Cardiac septum (tissue), 1 donor: ENCODE measurements at regions of chr5 and their contacts with region 1.

Region 1: GRCh38 chr5:36305571-36306326 is 4.0 kb upstream of the RANBP3L start:
- DNase-seq: no peak

Region 2: DNA sequence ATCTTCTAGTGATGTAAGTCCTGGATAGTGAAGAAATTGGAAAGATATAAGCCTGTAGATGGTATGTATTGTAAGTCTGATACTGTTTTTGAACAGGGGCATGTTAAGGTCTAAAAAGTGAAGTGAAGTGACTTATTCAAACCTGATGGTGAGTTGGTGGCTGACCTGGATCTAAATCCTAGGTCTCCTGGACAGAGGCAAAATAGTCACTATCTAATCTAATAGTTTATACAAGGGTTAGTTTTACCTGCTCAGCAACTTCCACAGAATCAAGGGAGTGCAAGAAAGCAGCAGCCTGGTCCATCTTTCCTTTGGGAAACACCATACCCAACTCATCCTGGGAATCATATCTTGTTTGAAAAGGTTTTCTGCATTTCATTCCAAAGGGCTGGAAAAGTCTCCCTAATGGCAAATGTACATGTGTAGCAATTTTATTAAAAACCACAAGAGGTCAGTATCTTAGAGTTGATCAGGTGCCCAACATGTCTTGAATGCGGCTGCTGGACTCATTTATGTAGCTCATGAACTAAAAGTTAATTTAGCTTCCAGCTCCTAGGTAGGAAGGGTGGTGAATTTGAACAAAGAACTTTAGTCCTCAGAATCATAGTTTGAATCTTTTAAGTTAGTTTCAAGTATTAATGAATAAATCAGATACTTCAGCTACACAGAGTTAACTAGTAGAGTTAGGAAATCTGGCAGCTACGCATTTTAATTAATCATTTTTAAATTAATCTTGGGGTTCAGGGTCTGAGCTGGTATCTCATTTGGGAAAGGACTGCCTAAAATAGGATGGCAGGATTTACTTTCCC is 127.8 kb before region 1 on chr5:
- intact Hi-C with region 1: loop called (anchors 5 kb)
- DNase-seq: no peak

Region 3: GRCh38 chr5:36241631-36242533 is 63.9 kb before region 1 on chr5 and contains the start of gene NADK2:
- intact Hi-C with region 1: loop called (anchors 10 kb)
- DNase-seq: peak; percentile 97
- total RNA-seq, gene NADK2: 34.6 TPM

Region 4: DNA sequence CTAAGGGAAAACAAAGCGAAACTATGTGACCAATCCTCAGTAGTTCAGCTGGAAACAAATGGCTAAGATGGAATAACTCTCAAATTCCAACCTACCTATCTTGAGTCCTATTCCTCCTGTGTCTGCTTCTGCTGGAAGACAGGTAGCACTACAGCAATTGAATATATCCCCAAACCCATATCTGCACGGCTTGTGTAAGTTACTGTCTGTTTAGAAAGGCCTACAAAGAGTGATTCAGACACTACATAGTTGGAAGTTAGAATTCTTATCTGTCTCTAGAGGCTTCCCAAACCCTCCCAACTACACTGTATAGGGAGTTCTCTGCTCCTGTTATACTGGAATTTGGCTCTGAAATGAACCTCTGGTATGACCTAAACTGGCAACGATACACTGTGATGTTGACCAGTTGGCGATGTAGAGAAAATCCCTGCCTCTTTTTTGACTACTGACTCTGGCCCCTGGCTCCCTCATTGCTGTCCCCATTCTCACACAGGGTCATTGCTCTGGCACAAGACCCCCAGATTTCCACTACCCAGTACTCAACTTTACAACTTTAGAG is 41.5 kb before region 1 on chr5:
- intact Hi-C with region 1: loop called (anchors 1 kb)
- DNase-seq: no peak